Right ventricle myocardium superior (tissue), 1 donor: ENCODE measurements at regions of chr2 and their contacts with region 1.

Region 1: GRCh38 chr2:202387608-202388342 is 11.6 kb downstream of the BMPR2 start:
- DNase-seq: no peak
- ATAC-seq: peak; percentile 66

Region 2: GRCh38 chr2:202436626-202437025 is 48.9 kb after region 1 on chr2:
- intact Hi-C with region 1: loop called (anchors 10 kb)
- DNase-seq: no peak
- ATAC-seq: peak; percentile 34